Colonic mucosa (tissue), 4 donors: ENCODE measurements at regions of chr10 and their contacts with region 1.

Region 1: GRCh38 chr10:99917963-99918825 is 91.6 kb downstream of the DNMBP start:
- DNase-seq: peak; percentile 65
- H3K4me3 ChIP-seq: no peak overlapping the region
- H3K27ac ChIP-seq: peak overlapping the region; percentile 90
- H3K4me1 ChIP-seq: peaks cover 26% of the 10 kb centered on the region
- H3K27me3 ChIP-seq: no peaks in the 10 kb centered on the region
- CTCF ChIP-seq: no peak

Region 2: GRCh38 chr10:99809931-99810615 is 108.1 kb before region 1 on chr10:
- intact Hi-C with region 1: no loop called
- DNase-seq: no peak
- H3K4me3 ChIP-seq: no peak overlapping the region
- H3K27ac ChIP-seq: no peak overlapping the region
- H3K4me1 ChIP-seq: no peaks in the 10 kb centered on the region
- H3K27me3 ChIP-seq: no peaks in the 10 kb centered on the region
- CTCF ChIP-seq: no peak

Region 3: GRCh38 chr10:100009793-100010676 is 91.8 kb after region 1 on chr10 and contains the start of gene DNMBP:
- intact Hi-C with region 1: loop called (anchors 10 kb)
- DNase-seq: peak; percentile 80
- H3K4me3 ChIP-seq: peak within 1 kb of the TSS; percentile 85
- H3K27ac ChIP-seq: peak within 1 kb of the TSS; percentile 68
- H3K4me1 ChIP-seq: peaks cover 10% of the 10 kb centered on the region
- H3K27me3 ChIP-seq: no peaks in the 10 kb centered on the region
- CTCF ChIP-seq: peak; percentile 25
- total RNA-seq, gene DNMBP: 38.4 to 53.5 TPM